Left lung (tissue), 14 donors: ENCODE measurements at regions of chr10 and their contacts with region 1.

Region 1: GRCh38 chr10:4512671-4513240 is 313.3 kb upstream of the AKR1E2 start:
- DNase-seq: peak in 2 of 4 donors; percentile 44 to 48
- ATAC-seq: peak; percentile 73
- H3K4me3 ChIP-seq: no peak overlapping the region
- H3K27ac ChIP-seq: no peak overlapping the region
- H3K4me1 ChIP-seq: peaks cover 5 to 24% of the 10 kb centered on the region in 2 donors
- H3K27me3 ChIP-seq: no peaks in the 10 kb centered on the region
- CTCF ChIP-seq: peak; percentile 24 to 32

Region 2: DNA sequence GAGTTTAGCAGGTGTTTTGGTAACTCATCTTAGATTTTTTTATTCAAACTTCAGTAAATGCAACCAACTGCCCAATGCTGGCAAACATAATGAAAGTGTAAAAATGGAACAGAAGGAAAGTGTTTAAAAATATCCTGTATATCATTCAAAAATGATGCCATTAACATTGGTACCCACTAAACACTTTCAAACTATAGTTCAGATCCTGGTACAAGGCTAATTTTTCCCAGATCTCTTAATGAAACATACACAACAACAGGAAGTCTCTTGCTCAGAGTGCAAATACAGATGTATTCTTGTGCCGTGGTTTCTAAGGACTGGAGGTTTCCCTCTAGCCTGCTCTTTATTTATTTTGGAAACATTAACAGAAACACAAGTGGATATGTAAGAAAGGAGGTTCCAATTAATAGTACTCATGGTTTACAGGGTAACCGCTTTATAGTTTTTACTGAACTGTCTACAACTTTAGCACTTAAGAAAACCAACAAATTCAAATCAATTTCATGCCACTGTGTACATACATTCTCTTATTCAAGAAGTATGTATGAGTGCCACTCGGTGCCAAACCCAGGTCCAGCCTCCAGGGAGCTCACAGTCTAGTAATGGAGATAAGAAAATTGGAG is 137.2 kb after region 1 on chr10:
- intact Hi-C with region 1: loop called in 1 of 2 experiments (anchors 10 kb)
- DNase-seq: peak in 1 of 4 donors; percentile 25
- ATAC-seq: peak; percentile 85
- H3K4me3 ChIP-seq: no peak overlapping the region
- H3K27ac ChIP-seq: no peak overlapping the region
- H3K4me1 ChIP-seq: no peaks in the 10 kb centered on the region
- H3K27me3 ChIP-seq: no peaks in the 10 kb centered on the region
- CTCF ChIP-seq: no peak

Region 3: GRCh38 chr10:4678023-4678950 is 165.5 kb after region 1 on chr10:
- intact Hi-C with region 1: no loop called
- DNase-seq: no peak
- ATAC-seq: peak; percentile 83
- H3K4me3 ChIP-seq: no peak overlapping the region
- H3K27ac ChIP-seq: peak overlapping the region; percentile 30 to 69
- H3K4me1 ChIP-seq: peaks cover 0 to 19% of the 10 kb centered on the region in 2 donors
- H3K27me3 ChIP-seq: no peaks in the 10 kb centered on the region
- CTCF ChIP-seq: no peak